ENCODE measurements at regions of chr1 and their contacts with region 1.

Region 1: DNA sequence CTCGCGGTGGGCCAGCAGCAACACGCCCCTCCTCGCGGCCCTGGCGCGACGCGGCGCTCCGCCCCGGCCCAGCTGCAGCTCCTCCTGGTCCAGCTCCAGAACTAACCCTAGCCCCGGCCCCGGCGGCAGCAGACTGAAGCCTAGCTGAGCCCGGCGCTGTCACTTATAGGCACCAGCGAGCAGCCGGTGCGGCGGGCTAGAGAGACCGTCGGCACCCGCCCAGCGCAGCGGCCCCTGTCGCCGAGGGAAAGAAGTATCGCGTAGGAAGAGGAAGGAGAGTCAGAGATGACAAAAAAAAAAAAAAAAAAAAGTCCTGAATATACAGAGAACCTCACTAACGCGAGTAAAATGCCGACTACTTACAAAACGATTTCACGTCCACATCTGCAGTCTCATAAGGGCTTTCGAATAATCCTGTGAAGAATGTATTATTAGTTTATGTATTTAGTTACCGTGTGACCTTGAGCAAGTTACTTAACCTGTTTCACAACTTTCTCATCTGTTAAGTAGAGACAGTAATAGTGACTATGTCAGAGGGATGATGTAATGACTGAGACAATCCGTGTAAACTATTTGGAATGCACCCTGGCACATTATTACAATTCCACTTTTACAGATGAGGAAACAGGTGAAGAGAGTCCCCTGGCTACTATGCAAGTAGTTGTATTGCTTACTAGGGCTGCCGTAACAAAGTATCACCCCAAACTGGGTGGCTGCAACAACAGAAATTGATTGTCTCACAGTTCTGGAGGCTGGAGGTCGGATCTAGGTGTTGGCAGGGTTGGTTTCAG is at the start of gene SLC9A1:
- DNase-seq: peak; percentile 92

Region 2: DNA sequence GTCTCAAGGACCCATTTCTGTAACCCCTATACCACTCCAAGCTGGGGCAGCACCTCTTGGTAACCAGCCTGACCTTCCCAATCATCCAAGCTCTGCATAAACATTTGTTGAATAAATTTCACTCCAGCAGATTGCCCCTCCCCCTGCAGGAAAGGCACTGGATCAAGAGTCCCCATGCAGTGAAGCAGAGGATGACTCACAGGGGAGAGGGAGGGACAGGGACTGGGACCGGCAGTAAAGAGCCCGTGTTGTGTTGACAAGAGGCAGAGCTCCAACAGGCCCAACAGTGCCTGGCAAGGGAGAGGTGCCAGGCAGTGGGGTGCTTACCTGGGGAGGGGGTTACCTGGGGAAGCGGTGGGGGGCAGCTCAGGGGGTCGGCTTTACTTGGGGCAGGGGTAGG is 32.5 kb before region 1 on chr1:
- CTCF ChIA-PET with region 1: interaction called, 9 read pairs
- POLR2A ChIA-PET with region 1: interaction called, 15 read pairs
- DNase-seq: peak; percentile 60

Region 3: GRCh38 chr1:27135541-27136240 is 19.5 kb before region 1 on chr1:
- CTCF ChIA-PET with region 1: interaction called, 4 read pairs
- POLR2A ChIA-PET with region 1: interaction called, 28 read pairs
- DNase-seq: no peak

Region 4: GRCh38 chr1:27142464-27142863 is 12.7 kb before region 1 on chr1:
- CTCF ChIA-PET with region 1: interaction called, 4 read pairs
- POLR2A ChIA-PET with region 1: interaction called, 28 read pairs
- DNase-seq: no peak

Region 5: DNA sequence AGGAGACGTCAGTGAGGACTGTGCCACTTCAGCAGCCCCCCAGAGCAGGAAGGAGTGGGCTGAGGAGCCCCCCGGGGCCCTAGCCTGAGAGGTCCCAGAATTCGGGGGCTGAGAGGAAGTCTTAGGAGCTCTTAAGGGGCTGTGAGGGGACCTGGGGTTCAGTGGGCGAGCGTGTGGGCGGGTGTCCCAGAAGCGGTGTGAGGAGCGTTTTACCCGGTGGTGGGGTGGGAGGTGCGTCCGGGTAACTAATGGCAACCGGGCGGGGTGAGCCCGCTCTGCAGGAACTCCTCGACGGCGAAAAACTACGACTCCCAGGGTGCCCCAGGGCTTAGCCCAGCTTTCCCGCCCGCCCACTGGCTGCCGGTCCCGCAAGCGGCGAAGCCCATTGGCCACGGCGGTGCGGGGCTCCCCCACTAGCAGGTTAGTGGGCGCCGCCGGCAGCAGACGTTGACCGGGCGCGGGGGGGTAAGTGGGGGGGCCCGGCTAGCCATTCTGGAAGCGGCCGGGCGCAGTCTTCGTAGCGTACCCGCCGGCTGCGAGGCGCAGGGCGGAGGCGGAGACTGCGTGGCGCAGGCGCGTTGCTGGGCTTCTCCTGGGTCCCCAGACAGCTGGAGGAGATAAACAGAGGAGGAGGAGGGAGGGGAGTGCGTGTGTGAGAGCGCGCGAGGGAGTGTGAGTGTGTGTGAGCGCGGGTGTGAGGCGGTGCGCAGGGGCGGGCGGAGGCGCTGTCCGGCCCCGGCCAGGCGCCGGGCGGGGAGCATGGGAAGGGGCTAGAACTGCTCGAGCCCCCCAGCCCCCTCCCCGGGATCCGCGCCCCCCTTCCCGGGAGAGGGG is 79.1 kb after region 1 on chr1 and contains the start of gene WDTC1:
- CTCF ChIA-PET with region 1: interaction called, 6 read pairs
- POLR2A ChIA-PET with region 1: interaction called, 12 read pairs
- DNase-seq: peak; percentile 95